ENCODE measurements at regions of chr1 and their contacts with region 1.

Region 1: DNA sequence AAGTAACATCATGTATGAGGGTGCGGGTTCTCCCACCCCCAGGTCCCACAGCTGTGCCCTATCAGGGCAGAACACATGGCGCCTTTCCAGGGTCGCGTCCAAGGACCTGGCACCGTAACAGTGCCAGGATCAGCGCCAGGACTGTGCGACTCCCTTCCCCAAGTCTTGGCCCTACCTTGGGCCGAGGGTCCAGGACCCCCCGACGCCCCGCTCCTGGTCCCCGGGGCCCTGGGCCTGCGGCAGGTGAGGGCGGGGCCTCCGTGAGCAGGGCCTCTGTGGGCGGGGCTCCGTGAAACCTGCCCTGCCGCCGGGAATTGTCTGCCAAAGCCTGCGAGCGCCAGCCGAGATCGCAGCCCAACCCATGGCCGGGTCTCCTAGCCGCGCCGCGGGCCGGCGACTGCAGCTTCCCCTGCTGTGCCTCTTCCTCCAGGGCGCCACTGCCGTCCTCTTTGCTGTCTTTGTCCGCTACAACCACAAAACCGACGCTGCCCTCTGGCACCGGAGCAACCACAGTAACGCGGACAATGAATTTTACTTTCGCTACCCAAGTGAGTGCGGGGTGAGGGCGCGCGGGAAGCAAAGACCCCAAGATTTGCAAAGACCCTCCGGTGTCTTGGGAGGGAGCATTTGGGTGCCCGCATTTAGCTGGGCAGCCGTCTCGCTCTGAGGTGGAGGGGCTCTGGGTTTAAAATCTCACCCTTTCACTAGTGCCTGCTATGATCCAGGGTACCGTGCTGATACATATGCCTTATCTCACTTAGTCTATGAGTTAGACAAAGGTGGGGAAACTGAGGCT is at the start of gene RHBG:
- DNase-seq: no peak
- CTCF ChIP-seq: no peak

Region 2: GRCh38 chr1:156356875-156357534 is 12.1 kb before region 1 on chr1:
- CTCF ChIA-PET with region 1: interaction called, 16 read pairs
- POLR2A ChIA-PET with region 1: no interaction called
- DNase-seq: peak; percentile 88
- CTCF ChIP-seq: peak; percentile 79

Region 3: DNA sequence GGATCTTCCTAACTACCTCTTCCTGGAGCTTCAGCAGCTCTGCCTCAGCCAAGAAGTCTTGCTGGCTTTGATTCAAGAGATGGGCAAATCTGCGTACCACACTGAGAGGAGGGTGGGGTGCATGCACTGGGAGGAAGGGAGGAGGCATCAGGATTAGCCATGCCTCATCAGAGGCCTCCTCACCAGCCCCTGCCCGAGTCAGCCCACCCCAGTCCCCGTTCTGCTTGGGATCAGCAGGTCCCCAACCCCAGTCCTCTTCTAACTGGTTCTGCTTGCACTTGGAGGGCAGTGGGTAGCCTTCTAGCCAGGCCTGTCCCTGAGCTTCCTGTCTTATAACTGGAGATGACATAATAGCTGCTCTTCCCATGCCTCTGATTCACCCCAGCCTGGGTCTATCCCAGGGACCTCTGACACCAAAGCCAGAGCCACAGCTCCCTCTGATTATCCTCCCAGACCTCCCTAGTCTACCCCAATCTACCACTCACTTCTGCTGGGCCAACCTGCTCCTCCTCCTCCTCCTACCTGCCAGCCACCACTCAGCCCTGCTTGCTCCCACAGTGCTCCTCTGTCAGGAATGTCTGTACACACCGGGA is 171.8 kb after region 1 on chr1:
- CTCF ChIA-PET with region 1: no interaction called
- POLR2A ChIA-PET with region 1: no interaction called
- DNase-seq: no peak
- CTCF ChIP-seq: no peak

Measured in GM10248 (cell line).